ENCODE measurements at regions of chr3 and their contacts with region 1.

Region 1: GRCh38 chr3:17233398-17233800 is 348.6 kb downstream of the PLCL2 start:
- DNase-seq: peak; percentile 20
- H3K4me3 ChIP-seq: no peak overlapping the region
- H3K27ac ChIP-seq: no peak overlapping the region
- H3K27me3 ChIP-seq: no peaks in the 10 kb centered on the region
- CTCF ChIP-seq: peak; percentile 75

Region 2: DNA sequence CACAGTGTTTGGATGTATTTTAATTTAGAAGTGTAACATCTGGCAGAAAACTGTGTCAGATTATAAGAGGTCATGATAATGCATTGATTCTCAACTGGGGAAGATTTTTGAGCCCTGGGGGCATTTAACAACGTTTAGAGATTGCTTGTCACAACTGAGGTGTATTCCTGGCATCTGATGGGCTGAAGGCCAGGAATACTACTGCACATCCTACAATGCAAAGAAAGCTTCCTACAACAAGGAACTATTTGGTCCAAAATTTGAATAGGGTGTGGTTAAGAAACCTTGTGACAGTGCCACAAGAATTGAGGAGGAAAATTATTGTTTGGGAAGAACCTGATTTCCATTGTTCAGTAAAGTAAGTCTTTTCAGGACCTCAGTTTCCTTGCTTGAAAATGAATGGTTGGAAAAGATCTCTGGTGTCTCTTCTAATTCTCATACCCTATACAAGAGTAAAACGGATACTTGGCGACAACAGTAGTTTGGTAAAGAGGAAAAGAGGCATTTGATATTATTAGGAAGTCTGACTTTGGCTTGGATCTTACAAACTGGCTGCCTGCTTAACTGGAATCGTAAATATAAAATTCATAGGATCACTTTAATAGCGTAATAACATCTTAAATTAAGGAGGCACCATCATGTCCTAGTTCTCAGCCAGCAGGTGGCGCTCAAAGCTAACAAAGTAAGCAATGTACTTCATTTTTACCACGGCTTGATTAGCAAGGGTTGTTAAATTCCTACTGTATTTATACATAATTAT is 632.4 kb before region 1 on chr3:
- CTCF ChIA-PET with region 1: interaction called, 74 read pairs
- POLR2A ChIA-PET with region 1: no interaction called
- DNase-seq: peak; percentile 68
- H3K4me3 ChIP-seq: no peak overlapping the region
- H3K27ac ChIP-seq: no peak overlapping the region
- H3K27me3 ChIP-seq: no peaks in the 10 kb centered on the region
- CTCF ChIP-seq: peak; percentile 83

Region 3: DNA sequence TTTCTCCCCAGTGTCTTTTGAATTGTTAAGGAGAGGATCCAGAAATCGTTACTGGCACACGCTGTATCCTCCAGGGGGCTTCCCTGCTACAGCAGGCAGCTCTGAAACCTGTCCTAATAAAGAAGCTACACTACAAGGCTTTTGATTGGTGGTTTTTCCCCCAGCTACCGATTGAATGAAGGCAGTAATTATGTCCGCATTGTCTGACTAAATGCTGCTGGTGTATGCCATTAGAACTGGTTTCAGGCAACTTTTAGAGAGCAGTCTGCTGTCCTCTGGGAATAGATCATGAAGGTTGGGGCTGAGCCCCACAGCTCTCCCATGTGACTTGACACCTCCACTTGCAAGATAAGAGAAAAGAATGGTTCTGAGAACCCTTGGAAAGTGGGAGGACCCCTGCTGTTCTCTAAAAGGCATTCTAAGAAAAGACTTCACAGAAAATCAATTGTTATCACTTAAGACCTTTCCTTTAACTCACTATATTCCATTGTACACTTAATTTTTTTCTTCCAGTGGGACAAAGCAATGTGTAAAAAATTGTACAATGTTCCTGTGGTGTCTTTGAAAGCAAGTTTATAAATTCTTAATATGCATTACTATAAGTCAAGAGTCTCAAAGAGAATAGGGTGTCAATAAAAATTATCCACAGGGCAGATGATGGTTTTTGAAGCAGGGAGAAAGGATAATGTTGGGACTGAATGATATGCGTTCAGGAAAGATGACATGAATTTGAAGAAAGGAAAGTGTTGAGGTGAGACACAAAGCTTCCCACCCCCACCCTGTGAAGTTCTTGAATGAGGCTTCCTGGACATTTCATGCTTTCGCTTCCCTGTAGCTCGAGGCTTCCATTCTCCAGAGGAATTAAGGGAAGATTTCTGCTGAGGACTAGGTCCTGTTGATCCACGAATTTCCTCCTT is 575.1 kb before region 1 on chr3:
- CTCF ChIA-PET with region 1: interaction called, 10 read pairs
- POLR2A ChIA-PET with region 1: no interaction called
- DNase-seq: no peak
- H3K4me3 ChIP-seq: no peak overlapping the region
- H3K27ac ChIP-seq: no peak overlapping the region
- H3K27me3 ChIP-seq: no peaks in the 10 kb centered on the region
- CTCF ChIP-seq: no peak

Region 4: GRCh38 chr3:17278006-17278405 is 44.6 kb after region 1 on chr3:
- CTCF ChIA-PET with region 1: no interaction called
- POLR2A ChIA-PET with region 1: no interaction called
- DNase-seq: no peak
- H3K4me3 ChIP-seq: no peak overlapping the region
- H3K27ac ChIP-seq: no peak overlapping the region
- H3K27me3 ChIP-seq: no peaks in the 10 kb centered on the region
- CTCF ChIP-seq: no peak